PC-9 (cell line): ENCODE measurements at regions of chr16 and their contacts with region 1.

Region 1: DNA sequence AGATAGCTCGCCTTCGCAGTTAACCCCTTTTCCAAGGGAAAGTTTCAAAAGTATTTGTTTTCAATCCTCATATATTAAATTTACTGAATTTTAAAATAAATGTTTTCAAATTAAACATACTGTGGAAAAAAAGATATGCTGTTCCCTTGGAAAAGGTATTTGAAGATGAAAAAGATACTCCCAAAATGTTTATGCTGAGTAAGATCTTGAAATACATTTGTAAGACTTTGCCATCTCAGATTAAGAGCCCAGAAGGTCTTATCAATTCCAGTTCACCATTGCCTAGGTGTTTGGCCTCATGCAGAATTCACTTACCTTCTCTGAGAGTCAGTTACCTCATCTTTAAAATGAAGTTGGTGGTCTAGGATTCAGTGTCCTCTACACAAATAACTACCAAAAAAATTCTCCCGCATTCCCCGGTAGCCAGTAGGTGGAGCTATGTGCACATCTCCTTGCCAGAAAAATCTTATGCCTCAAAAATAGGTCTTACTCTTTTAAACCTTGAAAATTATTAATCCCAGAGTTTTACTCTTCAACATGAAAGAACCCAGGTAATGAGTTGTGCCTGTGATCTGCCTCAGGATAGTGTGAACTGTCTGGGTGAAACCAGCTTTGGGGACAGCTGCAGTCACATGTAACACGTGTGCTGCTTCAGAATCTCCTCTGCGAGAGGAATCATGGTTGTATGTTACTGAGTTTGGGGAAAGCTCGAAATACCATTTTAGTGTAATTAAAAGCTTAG is 178.3 kb downstream of the MRTFB start:
- DNase-seq: peak in 1 of 2 experiments; percentile 55
- H3K4me3 ChIP-seq: no peak overlapping the region
- H3K27ac ChIP-seq: no peak overlapping the region
- H3K4me1 ChIP-seq: no peaks in the 10 kb centered on the region
- H3K27me3 ChIP-seq: no peaks in the 10 kb centered on the region
- CTCF ChIP-seq: peak; percentile 88

Region 2: GRCh38 chr16:13560151-13560550 is 689.3 kb before region 1 on chr16:
- CTCF ChIA-PET with region 1: no interaction called
- POLR2A ChIA-PET with region 1: interaction called, 10 read pairs
- intact Hi-C with region 1: no loop called
- DNase-seq: no peak
- H3K4me3 ChIP-seq: no peak overlapping the region
- H3K27ac ChIP-seq: no peak overlapping the region
- H3K4me1 ChIP-seq: no peaks in the 10 kb centered on the region
- H3K27me3 ChIP-seq: no peaks in the 10 kb centered on the region
- CTCF ChIP-seq: no peak

Region 3: DNA sequence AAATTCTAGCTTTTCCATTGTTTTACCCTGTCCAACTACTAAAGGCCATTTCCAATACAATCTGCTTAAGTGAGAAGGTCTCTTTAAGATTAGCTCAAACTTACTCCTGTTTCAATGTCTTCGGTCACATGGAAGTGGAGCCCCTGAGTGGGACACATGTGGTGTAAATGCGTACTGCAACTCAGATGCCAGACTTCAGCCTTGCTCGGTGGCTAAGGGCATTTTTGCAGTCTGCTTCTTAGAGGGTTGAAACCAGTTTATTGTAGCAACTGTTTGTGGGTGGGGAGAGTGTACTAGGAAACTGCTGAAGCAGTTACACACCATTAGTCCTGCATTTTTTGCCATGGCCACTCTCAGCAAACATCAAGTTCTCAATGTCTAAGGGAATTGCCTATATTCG is 240.0 kb after region 1 on chr16:
- CTCF ChIA-PET with region 1: no interaction called
- POLR2A ChIA-PET with region 1: no interaction called
- intact Hi-C with region 1: no loop called
- DNase-seq: no peak
- H3K4me3 ChIP-seq: no peak overlapping the region
- H3K27ac ChIP-seq: 0 out of 2 replicates have a peak overlapping the region, but pooled peaks have one; percentile 14
- H3K4me1 ChIP-seq: peaks cover 40% of the 10 kb centered on the region
- H3K27me3 ChIP-seq: no peaks in the 10 kb centered on the region
- CTCF ChIP-seq: peak; percentile 30; the same call in 1 of the 2 replicates